ENCODE measurements at regions of chr19 and their contacts with region 1.

Region 1: GRCh38 chr19:16330368-16330801 is 5.8 kb downstream of the KLF2 start:
- DNase-seq: peak; percentile 98
- H3K4me3 Mint-ChIP-seq: peak overlapping the region; percentile 40
- H3K27ac Mint-ChIP-seq: peak overlapping the region; percentile 79
- H3K4me1 Mint-ChIP-seq: peaks cover 57% of the 10 kb centered on the region
- H3K27me3 Mint-ChIP-seq: peaks cover 20% of the 10 kb centered on the region

Region 2: DNA sequence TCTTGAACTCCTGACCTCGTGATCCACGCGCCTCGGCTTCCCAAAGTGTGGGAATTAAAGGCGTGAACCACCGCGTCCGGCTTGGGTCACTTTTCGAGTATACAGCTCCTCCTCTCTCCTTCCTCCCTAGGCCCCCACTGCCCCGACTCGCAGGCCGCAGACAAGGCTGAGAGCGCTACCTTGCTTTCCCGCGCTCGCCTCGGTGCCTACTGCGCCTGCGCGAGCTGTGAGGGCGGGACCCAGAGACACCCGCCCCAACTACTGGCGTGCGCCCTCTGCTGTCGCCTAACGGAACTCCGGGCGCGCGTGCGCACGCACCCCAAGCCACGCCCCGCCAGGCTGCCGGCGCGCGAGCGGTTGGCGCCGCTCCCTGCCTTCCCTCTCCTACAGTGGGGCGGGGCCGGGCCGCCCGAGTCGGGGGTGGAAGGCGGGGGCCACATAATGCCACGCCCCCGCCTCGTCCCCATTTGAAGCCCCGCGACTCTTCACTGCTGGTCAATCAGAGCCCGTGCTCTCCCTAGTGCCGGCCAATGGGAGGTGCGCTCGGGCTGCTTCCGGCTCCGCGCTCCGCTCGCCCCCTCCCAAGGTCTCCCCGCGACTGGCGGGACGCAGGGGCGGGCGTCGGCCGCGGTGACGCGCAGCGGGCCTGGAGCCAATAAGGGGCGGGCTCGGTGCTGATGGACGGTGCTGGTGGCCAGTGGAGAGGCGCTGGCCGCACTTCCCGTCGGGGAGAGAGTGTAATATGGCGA is 219.1 kb before region 1 on chr19 and contains the start of gene RAB8A:
- CTCF ChIA-PET with region 1: no interaction called
- POLR2A ChIA-PET with region 1: no interaction called
- intact Hi-C with region 1: loop called (anchors 10 kb)
- DNase-seq: peak; percentile 99
- H3K4me3 Mint-ChIP-seq: peak within 1 kb of the TSS; percentile 98
- H3K27ac Mint-ChIP-seq: peak within 1 kb of the TSS; percentile 97
- H3K4me1 Mint-ChIP-seq: peaks cover 40% of the 10 kb centered on the region
- H3K27me3 Mint-ChIP-seq: no peaks in the 10 kb centered on the region
- total RNA-seq, gene RAB8A: 146 to 154 TPM

Region 3: DNA sequence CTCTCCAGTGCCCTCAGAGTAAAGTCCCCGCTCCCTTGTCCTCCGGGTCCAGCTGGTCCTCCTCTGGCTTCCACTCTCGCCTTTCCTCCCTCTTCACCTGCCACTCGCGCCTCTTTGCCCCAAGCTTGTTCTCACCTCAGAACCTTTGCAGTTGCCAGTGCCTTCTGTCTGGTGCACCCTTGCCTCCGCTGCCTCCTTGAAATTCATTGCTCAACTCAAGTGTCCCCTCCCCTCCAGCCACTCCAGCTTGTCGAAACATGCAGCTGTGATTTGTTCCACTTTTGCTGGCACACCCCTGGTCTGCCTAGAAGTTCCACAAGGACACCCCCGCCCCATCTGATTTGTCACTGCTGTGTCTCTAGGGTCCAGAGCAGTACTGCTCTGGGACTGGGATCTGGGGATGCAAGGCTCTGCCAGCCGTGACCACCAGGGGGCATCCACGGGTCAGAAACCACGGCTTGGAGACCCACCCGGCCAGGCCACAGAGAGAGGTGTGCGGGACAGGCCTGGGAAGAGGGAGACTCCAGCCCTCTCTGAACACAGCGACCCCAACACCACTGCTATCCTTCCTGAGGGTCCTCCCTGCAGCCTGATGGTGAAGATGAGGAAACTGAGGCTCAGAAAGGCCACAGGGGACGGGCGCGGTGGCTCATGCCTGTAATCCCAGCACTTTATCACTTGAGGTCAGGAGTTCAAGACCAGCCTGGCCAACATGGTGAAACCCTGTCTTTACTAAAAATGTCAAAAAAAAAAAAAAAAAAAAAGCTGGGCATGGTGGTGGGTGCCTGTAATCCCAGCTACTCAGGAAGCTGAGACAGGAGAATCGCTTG is 82.8 kb before region 1 on chr19:
- CTCF ChIA-PET with region 1: interaction called, 14 read pairs
- POLR2A ChIA-PET with region 1: interaction called, 3 read pairs
- intact Hi-C with region 1: no loop called
- DNase-seq: peak; percentile 88
- H3K4me3 Mint-ChIP-seq: no peak overlapping the region
- H3K27ac Mint-ChIP-seq: no peak overlapping the region
- H3K4me1 Mint-ChIP-seq: peaks cover 12% of the 10 kb centered on the region
- H3K27me3 Mint-ChIP-seq: no peaks in the 10 kb centered on the region

Region 4: GRCh38 chr19:16371540-16371986 is 41.2 kb after region 1 on chr19:
- CTCF ChIA-PET with region 1: interaction called, 12 read pairs
- POLR2A ChIA-PET with region 1: interaction called, 29 read pairs
- intact Hi-C with region 1: loop called (anchors 1 kb)
- DNase-seq: peak; percentile 95
- H3K4me3 Mint-ChIP-seq: peak overlapping the region; percentile 53
- H3K27ac Mint-ChIP-seq: peak overlapping the region; percentile 57
- H3K4me1 Mint-ChIP-seq: peaks cover 40% of the 10 kb centered on the region
- H3K27me3 Mint-ChIP-seq: peaks cover 7% of the 10 kb centered on the region

Region 5: GRCh38 chr19:16376649-16377048 is 46.3 kb after region 1 on chr19:
- CTCF ChIA-PET with region 1: interaction called, 12 read pairs
- POLR2A ChIA-PET with region 1: interaction called, 29 read pairs
- intact Hi-C with region 1: loop called (anchors 1 kb)
- DNase-seq: peak; percentile 33
- H3K4me3 Mint-ChIP-seq: no peak overlapping the region
- H3K27ac Mint-ChIP-seq: no peak overlapping the region
- H3K4me1 Mint-ChIP-seq: peaks cover 57% of the 10 kb centered on the region
- H3K27me3 Mint-ChIP-seq: no peaks in the 10 kb centered on the region